Activated B cell treated with CpG ODN at 0.5 μM for 24 hours (primary cell): ENCODE measurements at regions of chr3 and their contacts with region 1.

Region 1: GRCh38 chr3:107831590-107831989 is 259.2 kb downstream of the CD47 start:
- DNase-seq: no peak
- ATAC-seq: no peak
- H3K4me3 Mint-ChIP-seq: no peak overlapping the region
- H3K27ac Mint-ChIP-seq: no peak overlapping the region
- H3K4me1 Mint-ChIP-seq: no peaks in the 10 kb centered on the region
- H3K27me3 Mint-ChIP-seq: no peaks in the 10 kb centered on the region
- CTCF ChIP-seq: no peak

Region 2: GRCh38 chr3:107531917-107532469 is 299.6 kb before region 1 on chr3:
- CTCF ChIA-PET with region 1: no interaction called
- POLR2A ChIA-PET with region 1: no interaction called
- intact Hi-C with region 1: no loop called
- DNase-seq: no peak
- ATAC-seq: no peak
- H3K4me3 Mint-ChIP-seq: no peak overlapping the region
- H3K27ac Mint-ChIP-seq: no peak overlapping the region
- H3K4me1 Mint-ChIP-seq: peaks cover 31% of the 10 kb centered on the region
- H3K27me3 Mint-ChIP-seq: no peaks in the 10 kb centered on the region
- CTCF ChIP-seq: no peak

Region 3: GRCh38 chr3:107619549-107619948 is 212.0 kb before region 1 on chr3:
- CTCF ChIA-PET with region 1: no interaction called
- POLR2A ChIA-PET with region 1: no interaction called
- intact Hi-C with region 1: no loop called
- DNase-seq: no peak
- ATAC-seq: no peak
- H3K4me3 Mint-ChIP-seq: no peak overlapping the region
- H3K27ac Mint-ChIP-seq: no peak overlapping the region
- H3K4me1 Mint-ChIP-seq: peaks cover 59% of the 10 kb centered on the region
- H3K27me3 Mint-ChIP-seq: no peaks in the 10 kb centered on the region
- CTCF ChIP-seq: no peak

Region 4: DNA sequence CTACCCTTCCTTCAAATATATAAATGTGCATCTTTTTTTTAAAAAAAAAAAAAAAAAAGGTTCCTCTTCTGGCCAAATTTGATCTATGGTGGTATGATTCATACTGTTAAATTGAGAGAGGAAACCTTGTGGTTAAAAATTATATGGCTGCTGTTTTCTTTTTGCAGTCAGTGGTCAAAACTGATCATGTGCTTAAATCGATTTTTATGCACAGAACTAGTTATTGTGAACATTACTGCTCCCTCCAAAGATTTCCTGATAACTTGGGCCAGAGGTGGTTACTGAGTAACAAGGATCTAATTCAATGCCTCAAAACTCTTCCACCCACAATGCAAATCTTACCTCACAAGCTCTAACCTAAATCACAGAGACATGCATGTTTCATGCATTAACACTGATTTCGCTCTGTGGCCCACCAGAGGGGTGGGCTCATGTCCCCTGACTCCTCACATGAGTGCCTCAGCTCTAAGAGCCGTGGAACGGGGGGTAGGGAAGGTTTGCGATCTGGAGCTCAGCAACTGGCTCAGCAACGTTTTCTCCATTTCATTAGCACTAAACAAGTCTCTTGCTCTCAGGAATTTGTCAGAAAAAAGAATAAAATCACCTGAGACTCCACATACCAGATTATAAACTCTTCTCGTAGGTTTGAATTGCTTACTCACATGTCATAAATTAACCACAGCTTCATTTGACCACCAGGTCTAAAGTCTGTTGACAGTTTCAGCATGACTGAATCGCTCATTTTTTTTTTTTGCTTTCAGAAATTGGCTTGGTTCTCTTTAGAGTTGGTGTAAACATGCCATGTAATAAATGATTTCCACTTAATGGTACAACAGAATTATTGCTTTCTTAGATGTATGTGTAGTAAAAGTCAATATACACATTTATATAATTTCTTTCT is 21.2 kb before region 1 on chr3:
- CTCF ChIA-PET with region 1: no interaction called
- POLR2A ChIA-PET with region 1: no interaction called
- intact Hi-C with region 1: loop called (anchors 2 kb)
- DNase-seq: no peak
- ATAC-seq: peak; percentile 45
- H3K4me3 Mint-ChIP-seq: no peak overlapping the region
- H3K27ac Mint-ChIP-seq: peak overlapping the region; percentile 53
- H3K4me1 Mint-ChIP-seq: peaks cover 15% of the 10 kb centered on the region
- H3K27me3 Mint-ChIP-seq: no peaks in the 10 kb centered on the region
- CTCF ChIP-seq: no peak

Region 5: GRCh38 chr3:107969994-107970819 is 138.6 kb after region 1 on chr3:
- CTCF ChIA-PET with region 1: no interaction called
- POLR2A ChIA-PET with region 1: no interaction called
- intact Hi-C with region 1: no loop called
- DNase-seq: no peak
- ATAC-seq: peak; percentile 37
- H3K4me3 Mint-ChIP-seq: no peak overlapping the region
- H3K27ac Mint-ChIP-seq: no peak overlapping the region
- H3K4me1 Mint-ChIP-seq: peaks cover 6% of the 10 kb centered on the region
- H3K27me3 Mint-ChIP-seq: no peaks in the 10 kb centered on the region
- CTCF ChIP-seq: no peak